ENCODE measurements at regions of chr5 and their contacts with region 1.

Region 1: DNA sequence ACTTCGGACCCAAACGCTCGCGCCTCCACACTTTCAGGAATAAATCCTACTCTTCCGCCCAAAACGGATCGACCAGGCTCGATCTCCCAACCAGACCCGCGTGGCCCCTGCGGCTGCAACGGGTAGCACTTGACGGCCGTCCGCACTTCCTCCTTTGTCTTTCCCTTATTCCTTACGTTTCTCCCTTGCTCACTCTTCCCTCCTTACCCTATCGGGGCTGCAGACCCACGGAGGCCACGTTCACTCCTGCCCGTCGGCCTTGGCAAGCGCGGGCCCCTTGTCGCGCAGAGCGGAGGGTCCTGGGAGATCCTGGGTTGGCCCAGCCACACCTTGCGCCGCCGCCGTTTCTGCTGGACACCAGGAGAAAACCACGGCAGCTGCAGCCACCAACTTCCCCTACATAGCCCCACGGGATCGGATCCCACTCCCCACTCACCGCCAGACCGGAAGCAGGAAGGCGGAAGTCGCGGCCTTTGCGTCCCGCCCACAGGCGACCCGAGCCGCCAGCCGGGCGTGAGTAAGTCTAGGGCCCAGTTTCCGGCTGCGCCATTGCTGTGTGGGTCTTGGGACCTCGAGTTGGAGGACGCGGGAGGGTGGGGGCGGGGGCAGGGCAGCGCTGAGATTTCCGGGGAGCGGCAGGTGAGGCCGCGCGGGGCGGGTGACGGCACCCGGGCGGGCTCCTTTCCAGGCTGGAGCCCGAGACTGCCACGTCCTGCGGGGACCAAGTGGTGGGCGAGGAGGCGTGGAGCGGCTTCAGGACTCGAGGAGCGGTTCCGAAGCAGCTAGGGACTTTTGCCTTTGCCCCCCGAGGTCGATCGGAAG is at the start of gene SMIM15:
- DNase-seq: peak; percentile 89 to 90
- ATAC-seq: peak; percentile 98 to 99 (median 99)
- H3K4me3 ChIP-seq: peak within 1 kb of the TSS; percentile 65 to 99 (median 92)
- H3K27ac ChIP-seq: peak within 1 kb of the TSS; percentile 80 to 97 (median 94)
- H3K4me1 ChIP-seq: peaks cover 0 to 46% (median 22%) of the 10 kb centered on the region in 9 donors
- H3K27me3 ChIP-seq: no peaks in the 10 kb centered on the region
- CTCF ChIP-seq: no peak
- total RNA-seq, gene SMIM15: 18.8 to 26.1 (median 22.6) TPM

Region 2: GRCh38 chr5:61277190-61277589 is 115.0 kb after region 1 on chr5:
- intact Hi-C with region 1: loop called in 1 of 10 experiments (anchors 10 kb)
- DNase-seq: peak in 1 of 2 donors; percentile 20
- ATAC-seq: peak in 6 of 8 donors; percentile 30 to 74 (median 64)
- H3K4me3 ChIP-seq: peak overlapping the region in 5 of 10 donors; percentile 8 to 28 (median 19)
- H3K27ac ChIP-seq: peak overlapping the region in 3 of 10 donors; percentile 5 to 88 (median 53)
- H3K4me1 ChIP-seq: peaks cover 0 to 76% (median 6%) of the 10 kb centered on the region in 9 donors
- H3K27me3 ChIP-seq: no peaks in the 10 kb centered on the region
- CTCF ChIP-seq: peak in 6 of 9 donors; percentile 21 to 57 (median 38)

Region 3: DNA sequence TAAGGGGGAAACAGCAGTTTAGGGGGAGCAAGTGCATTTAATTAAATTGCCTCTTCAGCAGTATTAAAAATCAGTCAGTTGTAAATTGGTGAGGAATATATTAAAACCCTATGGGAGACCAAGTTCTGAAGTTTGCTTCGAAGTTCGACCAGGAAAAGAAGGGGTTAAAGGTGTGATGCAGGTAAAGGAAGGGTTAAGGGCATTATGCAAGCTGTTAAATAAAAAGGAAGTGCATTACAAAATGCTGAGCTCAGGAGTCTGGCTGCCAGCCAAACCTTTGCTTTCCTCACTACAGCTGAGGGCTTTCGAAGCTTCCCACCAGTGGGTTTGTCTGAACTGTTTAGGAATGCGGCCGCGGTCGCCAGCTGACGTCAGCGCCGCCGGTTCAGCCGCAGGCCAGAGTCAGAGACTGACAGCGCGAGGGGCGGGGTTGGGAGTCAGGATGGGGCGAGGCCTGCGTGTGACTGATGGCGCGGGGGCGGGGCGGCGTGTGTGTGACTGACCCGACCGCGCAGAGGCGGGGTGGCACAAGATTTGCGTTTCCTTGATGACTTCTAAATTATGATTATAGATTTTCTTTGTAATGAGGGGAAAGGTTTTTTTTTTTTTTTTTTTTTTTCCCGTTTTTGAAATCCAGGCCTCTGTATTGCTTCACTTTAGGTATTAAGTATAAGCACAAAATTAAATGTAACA is 246.4 kb after region 1 on chr5:
- intact Hi-C with region 1: loop called in 2 of 10 experiments (anchors 2 to 10 kb)
- DNase-seq: peak; percentile 99
- ATAC-seq: peak; percentile 100
- H3K4me3 ChIP-seq: peak overlapping the region in 8 of 10 donors; percentile 2 to 38 (median 32)
- H3K27ac ChIP-seq: peak overlapping the region in 6 of 10 donors; percentile 8 to 67 (median 41)
- H3K4me1 ChIP-seq: peaks cover 0 to 27% (median 20%) of the 10 kb centered on the region in 9 donors
- H3K27me3 ChIP-seq: no peaks in the 10 kb centered on the region
- CTCF ChIP-seq: peak in 3 of 9 donors; percentile 11 to 30 (median 29)

Region 4: DNA sequence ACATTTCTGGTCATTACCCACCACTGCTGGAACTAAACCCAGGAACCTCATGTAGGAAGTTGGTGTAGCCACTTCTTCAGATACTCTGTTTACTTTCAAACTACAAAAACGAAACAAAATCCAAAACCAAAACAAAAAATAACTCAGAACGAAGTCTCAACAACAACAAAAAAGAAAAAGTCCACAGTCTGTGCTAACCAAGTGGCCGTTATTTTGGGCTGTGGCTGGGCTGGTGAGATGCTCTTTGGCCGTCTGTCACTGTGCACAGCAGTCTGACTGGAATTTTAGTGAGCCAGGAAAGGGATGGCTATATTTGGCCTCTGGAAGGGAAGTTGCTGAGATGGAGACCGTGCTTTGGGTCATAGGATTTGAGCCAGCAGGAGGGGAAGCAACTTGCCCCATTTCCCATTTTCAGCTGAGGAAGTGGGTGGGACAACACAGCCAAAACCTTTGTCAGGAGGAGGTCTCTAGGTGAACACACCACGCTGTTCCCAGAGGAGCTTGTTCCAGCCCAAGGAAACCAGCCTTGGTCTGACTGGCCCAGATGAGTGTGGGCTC is 503.9 kb after region 1 on chr5:
- intact Hi-C with region 1: loop called in 3 of 10 experiments (anchors 10 kb)
- DNase-seq: peak in 1 of 2 donors; percentile 38
- ATAC-seq: peak; percentile 42 to 88 (median 80)
- H3K4me3 ChIP-seq: peak overlapping the region in 4 of 10 donors; percentile 8 to 31 (median 13)
- H3K27ac ChIP-seq: peak overlapping the region in 8 of 10 donors; percentile 12 to 71 (median 54)
- H3K4me1 ChIP-seq: peaks cover 0 to 26% (median 10%) of the 10 kb centered on the region in 9 donors
- H3K27me3 ChIP-seq: no peaks in the 10 kb centered on the region
- CTCF ChIP-seq: no peak